Activated T-helper 2 cell treated with anti-CD3 and anti-CD28 coated beads, Interferon-gamma antibody, Interleukin-2, Interleukin-4, amounts not matched to agents 10 μg/mL and 5 μg/mL and 100 μg/mL, durations not matched to agents 14 hours and 24 hours and 36 hours (primary cell): ENCODE measurements at regions of chr19 and their contacts with region 1.

Region 1: DNA sequence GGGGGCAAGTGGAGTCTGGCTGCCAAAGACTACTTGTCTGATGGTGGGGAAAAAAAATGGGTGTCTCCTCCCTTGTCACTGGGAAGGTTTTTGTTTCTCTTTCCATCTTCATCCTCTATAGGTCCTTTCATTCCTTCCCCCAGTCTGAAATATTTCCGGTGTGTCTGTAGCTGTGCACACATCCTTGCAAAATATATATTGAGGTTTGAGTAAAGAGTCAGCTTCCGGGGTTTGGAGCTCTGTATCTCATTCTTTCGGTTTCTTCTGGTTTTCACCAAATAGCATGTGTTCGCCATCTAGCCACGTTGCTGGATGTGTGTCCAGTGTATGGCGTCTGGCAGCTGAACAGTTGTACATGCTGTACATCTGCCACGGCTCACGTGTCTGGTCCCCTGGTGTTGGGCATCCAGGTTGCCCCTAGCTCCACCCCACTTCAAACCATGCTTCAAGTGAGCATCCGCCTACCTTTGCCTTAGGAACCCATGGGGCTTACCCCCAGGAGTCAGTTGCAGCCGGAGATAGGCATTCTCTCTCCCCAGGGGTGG is 142.2 kb downstream of the SIPA1L3 start:
- DNase-seq: peak; percentile 57
- H3K4me3 Mint-ChIP-seq: peak overlapping the region; percentile 74
- H3K27ac Mint-ChIP-seq: peak overlapping the region; percentile 96
- H3K4me1 Mint-ChIP-seq: peaks cover 31% of the 10 kb centered on the region
- H3K27me3 Mint-ChIP-seq: no peaks in the 10 kb centered on the region

Region 2: GRCh38 chr19:38020311-38020710 is 28.9 kb before region 1 on chr19:
- intact Hi-C with region 1: no loop called
- DNase-seq: no peak
- H3K4me3 Mint-ChIP-seq: no peak overlapping the region
- H3K27ac Mint-ChIP-seq: no peak overlapping the region
- H3K4me1 Mint-ChIP-seq: no peaks in the 10 kb centered on the region
- H3K27me3 Mint-ChIP-seq: no peaks in the 10 kb centered on the region

Region 3: GRCh38 chr19:38079926-38080380 is 30.8 kb after region 1 on chr19:
- intact Hi-C with region 1: loop called (anchors 2 kb)
- DNase-seq: no peak
- H3K4me3 Mint-ChIP-seq: no peak overlapping the region
- H3K27ac Mint-ChIP-seq: no peak overlapping the region
- H3K4me1 Mint-ChIP-seq: peaks cover 8% of the 10 kb centered on the region
- H3K27me3 Mint-ChIP-seq: no peaks in the 10 kb centered on the region

Region 4: DNA sequence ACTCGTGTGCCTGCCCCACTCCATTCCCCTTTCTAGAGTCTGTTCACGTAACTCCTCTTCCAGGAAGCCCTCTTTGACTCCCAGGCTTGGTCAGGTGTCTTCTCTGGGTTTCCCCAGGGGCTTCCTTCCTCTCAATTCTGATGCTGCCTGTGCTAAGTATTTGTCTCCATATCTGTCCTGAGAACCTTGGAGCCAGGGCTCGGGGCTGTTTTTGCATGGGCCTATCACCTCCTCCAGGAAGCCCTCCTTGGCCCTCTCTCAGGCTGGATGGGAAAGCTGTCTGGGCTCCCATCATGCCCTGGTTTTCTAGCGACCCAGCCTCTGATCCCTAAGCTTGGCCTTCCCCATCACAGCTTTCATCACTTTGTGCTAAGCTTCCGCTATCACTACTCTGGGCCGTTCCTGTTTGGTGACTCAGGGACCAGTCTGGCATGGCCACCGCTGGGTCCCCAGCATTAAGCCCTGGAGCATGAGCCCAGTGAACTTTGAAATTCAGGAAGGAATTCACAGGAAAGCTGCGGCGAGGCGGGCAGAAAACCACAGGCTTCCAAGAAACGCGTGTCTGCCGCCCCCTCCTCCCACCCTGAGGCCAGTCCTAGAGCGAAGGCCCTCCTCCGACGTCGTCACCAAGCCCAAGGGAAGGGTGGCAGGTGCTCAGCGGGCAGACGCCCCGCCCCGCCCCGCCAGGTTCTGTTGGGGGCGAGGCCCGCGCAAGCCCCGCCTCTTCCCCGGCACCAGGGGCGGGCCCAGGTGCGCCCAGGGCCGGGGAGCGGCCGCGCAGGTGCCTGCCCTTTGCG is 214.7 kb after region 1 on chr19:
- intact Hi-C with region 1: no loop called
- DNase-seq: peak; percentile 75
- H3K4me3 Mint-ChIP-seq: peak overlapping the region; percentile 95
- H3K27ac Mint-ChIP-seq: peak overlapping the region; percentile 98
- H3K4me1 Mint-ChIP-seq: peaks cover 50% of the 10 kb centered on the region
- H3K27me3 Mint-ChIP-seq: no peaks in the 10 kb centered on the region